Panc1 (cell line): ENCODE measurements at regions of chr6 and their contacts with region 1.

Region 1: GRCh38 chr6:111483736-111484632 is 966 bp upstream of the REV3L start:
- DNase-seq: peak; percentile 83
- ATAC-seq: peak; percentile 87
- H3K4me3 ChIP-seq: peak overlapping the region; percentile 90 to 92
- H3K27ac ChIP-seq: peak overlapping the region; percentile 99
- H3K4me1 ChIP-seq: peaks cover 40% of the 10 kb centered on the region
- H3K27me3 ChIP-seq: no peaks in the 10 kb centered on the region
- CTCF ChIP-seq: no peak

Region 2: DNA sequence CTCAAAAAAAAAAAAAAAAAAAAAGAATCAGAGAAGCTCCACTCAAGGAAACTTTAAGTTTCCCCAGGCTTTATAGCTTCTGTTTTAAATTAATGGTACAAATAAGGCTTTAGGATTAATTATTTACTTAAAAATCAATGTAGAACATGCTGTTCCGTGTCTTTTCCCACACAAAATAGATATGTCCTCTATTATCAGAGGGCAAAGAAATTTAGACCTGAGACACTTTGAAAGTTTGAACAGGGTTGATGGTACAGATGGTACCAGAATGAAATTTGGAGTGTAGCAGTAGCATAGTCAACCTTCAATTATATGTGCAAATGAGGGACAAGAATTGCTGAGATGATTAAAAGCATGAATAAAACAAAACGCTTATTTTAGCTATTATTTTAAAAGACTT is 31.3 kb after region 1 on chr6:
- CTCF ChIA-PET with region 1: no interaction called
- POLR2A ChIA-PET with region 1: no interaction called
- in situ Hi-C with region 1: no loop called
- intact Hi-C with region 1: no loop called
- DNase-seq: no peak
- ATAC-seq: no peak
- H3K4me3 ChIP-seq: no peak overlapping the region
- H3K27ac ChIP-seq: no peak overlapping the region
- H3K4me1 ChIP-seq: 0 out of 2 replicates have a peak, but pooled peaks cover 3% of the 10 kb centered on the region
- H3K27me3 ChIP-seq: no peaks in the 10 kb centered on the region
- CTCF ChIP-seq: no peak

Region 3: DNA sequence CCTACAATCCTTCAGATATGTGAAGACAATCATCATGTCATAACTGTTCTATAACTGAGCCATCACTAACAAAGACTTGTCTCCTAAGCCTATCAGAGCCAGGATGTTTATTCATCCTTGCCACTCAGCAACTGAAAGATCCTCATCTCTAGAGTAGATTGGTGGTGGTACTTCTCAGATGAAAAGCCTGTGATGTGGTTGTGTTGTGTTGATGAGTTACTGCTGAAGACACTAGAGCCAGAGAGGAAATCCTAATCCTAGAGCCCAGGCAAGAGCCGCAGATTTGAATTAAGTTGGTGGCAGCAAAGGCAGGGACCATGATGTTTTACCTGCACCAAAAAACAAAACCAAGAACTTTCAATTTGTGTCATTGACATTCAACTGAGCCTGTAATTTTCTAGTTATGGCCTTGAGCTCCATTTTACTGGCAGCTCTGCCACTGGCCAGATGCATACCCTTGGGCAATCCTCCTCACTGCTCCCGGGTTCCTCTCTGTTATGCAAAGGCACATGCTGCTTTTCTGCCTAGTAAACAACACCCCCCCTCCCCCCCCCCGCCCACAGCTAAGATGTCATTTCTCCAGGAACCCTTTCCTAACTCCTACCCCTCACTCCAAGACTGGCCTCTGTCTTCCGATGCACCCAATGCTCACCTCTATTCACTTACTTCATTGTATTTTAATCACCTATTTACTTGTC is 49.3 kb after region 1 on chr6:
- CTCF ChIA-PET with region 1: interaction called, 11 read pairs
- POLR2A ChIA-PET with region 1: no interaction called
- in situ Hi-C with region 1: no loop called
- intact Hi-C with region 1: no loop called
- DNase-seq: no peak
- ATAC-seq: no peak
- H3K4me3 ChIP-seq: no peak overlapping the region
- H3K27ac ChIP-seq: peak overlapping the region; percentile 49; the same call in 1 of the 2 replicates
- H3K4me1 ChIP-seq: peaks cover 25% of the 10 kb centered on the region
- H3K27me3 ChIP-seq: no peaks in the 10 kb centered on the region
- CTCF ChIP-seq: no peak

Region 4: DNA sequence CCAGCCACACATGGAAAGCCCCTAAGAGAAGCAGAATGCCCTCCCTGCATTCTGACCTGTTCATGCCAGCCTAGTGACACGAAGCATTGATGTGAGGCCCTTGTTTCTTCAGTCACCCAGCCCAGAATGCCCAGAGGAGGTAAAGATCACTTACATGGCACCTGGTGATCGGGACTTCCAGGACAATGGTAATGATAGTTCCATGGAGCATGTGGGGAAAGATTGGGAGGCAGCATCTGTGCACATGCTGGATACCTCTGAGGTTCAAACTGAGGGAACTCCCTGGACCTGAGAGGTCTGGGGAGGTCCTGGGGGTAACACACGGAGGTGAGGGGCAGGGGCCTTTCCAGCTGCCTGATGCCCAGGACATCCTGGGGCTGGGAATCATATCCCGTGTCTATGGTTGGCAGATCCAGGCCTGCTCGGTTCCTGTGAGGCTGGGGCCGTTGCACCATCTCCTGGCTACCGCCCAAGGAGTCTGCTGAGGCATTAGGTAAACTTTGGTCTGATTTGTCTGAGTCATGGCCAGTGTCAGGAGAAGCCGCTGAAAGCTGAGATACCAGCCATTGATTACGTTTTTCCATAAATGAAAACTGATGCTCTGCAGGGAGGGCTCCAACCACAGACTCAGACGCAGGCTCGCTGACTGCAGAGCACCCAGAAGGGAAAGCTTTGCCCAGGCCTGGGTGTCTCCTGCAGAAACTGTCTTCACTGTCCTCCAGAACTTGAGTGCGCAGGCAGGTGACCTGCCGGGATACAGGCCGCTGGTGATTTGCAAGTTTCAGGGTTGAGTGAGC is 107.3 kb after region 1 on chr6:
- CTCF ChIA-PET with region 1: no interaction called
- POLR2A ChIA-PET with region 1: interaction called, 3 read pairs
- in situ Hi-C with region 1: no loop called
- intact Hi-C with region 1: loop called (anchors 5 kb)
- DNase-seq: peak; percentile 98
- ATAC-seq: peak; percentile 89
- H3K4me3 ChIP-seq: peak overlapping the region in 1 of 2 experiments; percentile 34; a peak in 3 of 4 replicates
- H3K27ac ChIP-seq: peak overlapping the region; percentile 94
- H3K4me1 ChIP-seq: peaks cover 76% of the 10 kb centered on the region
- H3K27me3 ChIP-seq: no peaks in the 10 kb centered on the region
- CTCF ChIP-seq: no peak

Region 5: GRCh38 chr6:111605100-111605751 is 121.2 kb after region 1 on chr6:
- CTCF ChIA-PET with region 1: no interaction called
- POLR2A ChIA-PET with region 1: interaction called, 3 read pairs
- in situ Hi-C with region 1: no loop called
- intact Hi-C with region 1: loop called (anchors 5 kb)
- DNase-seq: no peak
- ATAC-seq: peak; percentile 58
- H3K4me3 ChIP-seq: peak overlapping the region; percentile 58 to 80
- H3K27ac ChIP-seq: peak overlapping the region; percentile 98
- H3K4me1 ChIP-seq: peaks cover 52% of the 10 kb centered on the region
- H3K27me3 ChIP-seq: no peaks in the 10 kb centered on the region
- CTCF ChIP-seq: no peak